ENCODE measurements at regions of chr17 and their contacts with region 1.

Region 1: GRCh38 chr17:55377671-55378275 is 43.9 kb downstream of the MMD start:
- DNase-seq: no peak
- H3K4me3 ChIP-seq: no peak overlapping the region
- H3K27ac ChIP-seq: no peak overlapping the region
- H3K4me1 ChIP-seq: no peaks in the 10 kb centered on the region
- H3K27me3 ChIP-seq: no peaks in the 10 kb centered on the region
- CTCF ChIP-seq: no peak
- EP300 ChIP-seq: no peak
- POLR2A ChIP-seq: no peak

Region 2: GRCh38 chr17:55391764-55392467 is 14.1 kb after region 1 on chr17:
- intact Hi-C with region 1: loop called (anchors 2 kb)
- DNase-seq: no peak
- H3K4me3 ChIP-seq: no peak overlapping the region
- H3K27ac ChIP-seq: no peak overlapping the region
- H3K4me1 ChIP-seq: peaks cover 0 to 19% (median 5%) of the 10 kb centered on the region in 4 donors
- H3K27me3 ChIP-seq: no peaks in the 10 kb centered on the region
- CTCF ChIP-seq: no peak
- EP300 ChIP-seq: no peak
- POLR2A ChIP-seq: no peak

Measured in sigmoid colon (tissue), 7 donors.